Activated CD8-positive, alpha-beta T cell treated with anti-CD3 and anti-CD28 coated beads, Interleukin-2, amount 10 ng/mL, durations not matched to agents 7 days and 5 days (primary cell): ENCODE measurements at regions of chr6 and their contacts with region 1.

Region 1: GRCh38 chr6:132669690-132670291 is 10.8 kb upstream of the TAAR1 start:
- DNase-seq: no peak
- ATAC-seq: peak; percentile 60
- H3K4me3 Mint-ChIP-seq: no peak overlapping the region
- H3K27ac Mint-ChIP-seq: no peak overlapping the region
- H3K4me1 Mint-ChIP-seq: peaks cover 18% of the 10 kb centered on the region
- H3K27me3 Mint-ChIP-seq: peaks cover 11% of the 10 kb centered on the region

Region 2: GRCh38 chr6:132391391-132392271 is 278.2 kb before region 1 on chr6:
- CTCF ChIA-PET with region 1: no interaction called
- POLR2A ChIA-PET with region 1: no interaction called
- DNase-seq: no peak
- ATAC-seq: no peak
- H3K4me3 Mint-ChIP-seq: no peak overlapping the region
- H3K27ac Mint-ChIP-seq: no peak overlapping the region
- H3K4me1 Mint-ChIP-seq: no peaks in the 10 kb centered on the region
- H3K27me3 Mint-ChIP-seq: peaks cover 17% of the 10 kb centered on the region

Region 3: DNA sequence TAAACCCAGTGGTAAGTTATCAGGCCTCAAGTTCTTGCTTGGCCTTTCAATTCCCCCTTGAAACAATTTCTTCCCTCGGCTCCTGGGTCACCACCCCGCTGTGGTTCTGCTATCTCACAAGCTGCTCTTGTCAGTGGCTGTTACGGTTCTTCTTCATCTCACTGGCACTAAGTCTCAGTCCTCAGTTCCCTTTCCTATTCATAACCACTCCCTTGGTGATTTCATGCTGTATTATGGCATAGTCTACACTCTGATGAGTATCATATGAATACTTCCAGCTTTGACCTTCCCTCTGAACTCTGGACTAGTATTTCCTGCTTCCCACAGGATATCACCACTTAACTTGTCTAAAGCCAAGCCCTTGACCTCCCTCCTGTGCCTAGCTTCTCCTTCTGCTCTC is 18.7 kb before region 1 on chr6:
- CTCF ChIA-PET with region 1: interaction called, 16 read pairs
- POLR2A ChIA-PET with region 1: no interaction called
- DNase-seq: no peak
- ATAC-seq: no peak
- H3K4me3 Mint-ChIP-seq: no peak overlapping the region
- H3K27ac Mint-ChIP-seq: no peak overlapping the region
- H3K4me1 Mint-ChIP-seq: peaks cover 6% of the 10 kb centered on the region
- H3K27me3 Mint-ChIP-seq: peaks cover 5% of the 10 kb centered on the region